PC-9 (cell line): ENCODE measurements at regions of chr19 and their contacts with region 1.

Region 1: GRCh38 chr19:21328885-21329605 is at the start of gene ZNF708:
- DNase-seq: peak; percentile 82 to 83
- H3K4me3 ChIP-seq: peak within 1 kb of the TSS; percentile 79
- H3K27ac ChIP-seq: peak within 1 kb of the TSS; percentile 57
- H3K4me1 ChIP-seq: peaks cover 7% of the 10 kb centered on the region
- H3K27me3 ChIP-seq: no peaks in the 10 kb centered on the region
- CTCF ChIP-seq: no peak
- total RNA-seq, gene ZNF708: 2.5 and 4.2 TPM in 2 replicates

Region 2: GRCh38 chr19:20565321-20566018 is 763.6 kb before region 1 on chr19 and contains the start of gene ZNF737:
- CTCF ChIA-PET with region 1: no interaction called
- POLR2A ChIA-PET with region 1: no interaction called
- intact Hi-C with region 1: no loop called
- DNase-seq: peak; percentile 88 to 94
- H3K4me3 ChIP-seq: peak within 1 kb of the TSS; percentile 72
- H3K27ac ChIP-seq: peak within 1 kb of the TSS; percentile 31; the same call in 1 of the 2 replicates
- H3K4me1 ChIP-seq: no peaks in the 10 kb centered on the region; the same call in 1 of the 2 replicates
- H3K27me3 ChIP-seq: no peaks in the 10 kb centered on the region
- CTCF ChIP-seq: no peak
- total RNA-seq, gene ZNF737: 5.4 and 6.0 TPM in 2 replicates

Region 3: GRCh38 chr19:21396893-21397572 is 68.0 kb after region 1 on chr19 and contains the start of gene ZNF493:
- CTCF ChIA-PET with region 1: interaction called, 3 read pairs
- POLR2A ChIA-PET with region 1: interaction called, 3 read pairs
- intact Hi-C with region 1: loop called (anchors 2 kb)
- DNase-seq: peak; percentile 92 to 93
- H3K4me3 ChIP-seq: peak within 1 kb of the TSS; percentile 91
- H3K27ac ChIP-seq: no peak within 1 kb of the TSS
- H3K4me1 ChIP-seq: peaks cover 10% of the 10 kb centered on the region; the same call in 1 of the 2 replicates
- H3K27me3 ChIP-seq: no peaks in the 10 kb centered on the region
- CTCF ChIP-seq: no peak
- total RNA-seq, gene ZNF493: 14.5 and 16.6 TPM in 2 replicates